ENCODE measurements at regions of chr13 and their contacts with region 1.

Region 1: GRCh38 chr13:22114630-22115311 is 443.9 kb downstream of the FGF9 start:
- DNase-seq: peak; percentile 24
- ATAC-seq: peak; percentile 80
- H3K4me3 Mint-ChIP-seq: no peak overlapping the region
- H3K27ac Mint-ChIP-seq: peak overlapping the region; percentile 84
- H3K4me1 Mint-ChIP-seq: peaks cover 47% of the 10 kb centered on the region
- H3K27me3 Mint-ChIP-seq: no peaks in the 10 kb centered on the region

Region 2: GRCh38 chr13:22061806-22062391 is 52.9 kb before region 1 on chr13:
- CTCF ChIA-PET with region 1: no interaction called
- POLR2A ChIA-PET with region 1: no interaction called
- intact Hi-C with region 1: loop called (anchors 2 kb)
- DNase-seq: no peak
- ATAC-seq: peak; percentile 28
- H3K4me3 Mint-ChIP-seq: peak overlapping the region; percentile 39
- H3K27ac Mint-ChIP-seq: peak overlapping the region; percentile 84
- H3K4me1 Mint-ChIP-seq: peaks cover 62% of the 10 kb centered on the region
- H3K27me3 Mint-ChIP-seq: no peaks in the 10 kb centered on the region

Region 3: GRCh38 chr13:22073718-22074117 is 41.1 kb before region 1 on chr13:
- CTCF ChIA-PET with region 1: no interaction called
- POLR2A ChIA-PET with region 1: interaction called, 5 read pairs
- intact Hi-C with region 1: loop called (anchors 1 to 2 kb)
- DNase-seq: no peak
- ATAC-seq: peak; percentile 39
- H3K4me3 Mint-ChIP-seq: no peak overlapping the region
- H3K27ac Mint-ChIP-seq: no peak overlapping the region
- H3K4me1 Mint-ChIP-seq: peaks cover 44% of the 10 kb centered on the region
- H3K27me3 Mint-ChIP-seq: no peaks in the 10 kb centered on the region

Region 4: GRCh38 chr13:22135441-22136130 is 20.8 kb after region 1 on chr13:
- CTCF ChIA-PET with region 1: no interaction called
- POLR2A ChIA-PET with region 1: no interaction called
- intact Hi-C with region 1: no loop called
- DNase-seq: no peak
- ATAC-seq: no peak
- H3K4me3 Mint-ChIP-seq: no peak overlapping the region
- H3K27ac Mint-ChIP-seq: no peak overlapping the region
- H3K4me1 Mint-ChIP-seq: peaks cover 8% of the 10 kb centered on the region
- H3K27me3 Mint-ChIP-seq: no peaks in the 10 kb centered on the region

Region 5: DNA sequence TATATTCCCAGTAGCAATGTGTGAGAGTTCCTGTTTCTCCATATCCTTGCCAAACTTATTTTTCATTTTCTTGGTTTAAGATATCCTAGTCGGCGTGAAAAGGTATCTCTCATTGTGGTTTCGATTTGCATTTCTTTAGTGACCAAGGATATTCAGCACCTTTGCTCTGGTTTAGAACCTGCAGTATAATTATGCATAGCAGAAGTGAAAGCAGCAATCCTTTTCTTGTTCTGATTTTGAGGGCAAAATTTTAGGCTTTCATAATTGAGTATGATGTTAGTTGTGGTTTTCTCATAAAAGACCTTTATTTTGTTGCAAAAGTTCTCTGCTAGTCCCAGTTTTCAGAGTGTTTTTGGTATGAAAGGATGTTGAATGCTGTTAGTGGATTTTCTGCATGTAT is 47.1 kb after region 1 on chr13:
- CTCF ChIA-PET with region 1: interaction called, 3 read pairs
- POLR2A ChIA-PET with region 1: no interaction called
- intact Hi-C with region 1: loop called (anchors 2 to 10 kb)
- DNase-seq: no peak
- ATAC-seq: peak; percentile 70
- H3K4me3 Mint-ChIP-seq: no peak overlapping the region
- H3K27ac Mint-ChIP-seq: no peak overlapping the region
- H3K4me1 Mint-ChIP-seq: peaks cover 25% of the 10 kb centered on the region
- H3K27me3 Mint-ChIP-seq: no peaks in the 10 kb centered on the region

Region 6: GRCh38 chr13:22372261-22372660 is 257.5 kb after region 1 on chr13:
- CTCF ChIA-PET with region 1: no interaction called
- POLR2A ChIA-PET with region 1: no interaction called
- intact Hi-C with region 1: no loop called
- DNase-seq: no peak
- ATAC-seq: no peak
- H3K4me3 Mint-ChIP-seq: no peak overlapping the region
- H3K27ac Mint-ChIP-seq: no peak overlapping the region
- H3K4me1 Mint-ChIP-seq: no peaks in the 10 kb centered on the region
- H3K27me3 Mint-ChIP-seq: no peaks in the 10 kb centered on the region